Colonic mucosa (tissue), 4 donors: ENCODE measurements at regions of chr7 and their contacts with region 1.

Region 1: DNA sequence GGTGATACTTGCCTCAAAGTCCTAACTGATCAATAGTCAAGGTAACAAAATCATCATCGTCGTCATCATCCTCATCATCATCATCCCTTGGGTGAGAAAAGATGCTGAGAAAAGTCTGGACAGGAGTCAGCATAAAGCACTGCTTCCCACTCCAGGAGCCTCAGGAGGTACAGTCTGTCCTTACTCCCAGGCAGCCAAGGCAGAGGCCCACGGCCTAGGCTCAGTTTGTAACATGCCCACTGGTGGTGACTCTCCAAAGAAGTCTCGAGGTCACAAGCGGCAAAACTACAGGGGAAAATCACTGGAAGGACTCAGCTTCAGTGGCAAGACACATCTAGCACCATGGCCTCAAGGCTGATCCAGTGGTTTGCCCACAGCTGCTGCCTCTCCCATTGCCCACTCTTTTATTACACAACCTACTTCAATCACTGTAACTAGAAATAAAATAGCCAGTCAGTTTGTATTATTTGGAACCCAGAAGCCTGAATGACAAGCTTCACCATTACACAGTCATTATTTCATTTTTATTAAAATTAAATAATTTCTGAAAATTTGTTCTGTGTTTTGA is 150.4 kb downstream of the SRPK2 start:
- DNase-seq: no peak
- H3K4me3 ChIP-seq: no peak overlapping the region
- H3K27ac ChIP-seq: no peak overlapping the region
- H3K4me1 ChIP-seq: no peaks in the 10 kb centered on the region
- H3K27me3 ChIP-seq: no peaks in the 10 kb centered on the region
- CTCF ChIP-seq: no peak

Region 2: DNA sequence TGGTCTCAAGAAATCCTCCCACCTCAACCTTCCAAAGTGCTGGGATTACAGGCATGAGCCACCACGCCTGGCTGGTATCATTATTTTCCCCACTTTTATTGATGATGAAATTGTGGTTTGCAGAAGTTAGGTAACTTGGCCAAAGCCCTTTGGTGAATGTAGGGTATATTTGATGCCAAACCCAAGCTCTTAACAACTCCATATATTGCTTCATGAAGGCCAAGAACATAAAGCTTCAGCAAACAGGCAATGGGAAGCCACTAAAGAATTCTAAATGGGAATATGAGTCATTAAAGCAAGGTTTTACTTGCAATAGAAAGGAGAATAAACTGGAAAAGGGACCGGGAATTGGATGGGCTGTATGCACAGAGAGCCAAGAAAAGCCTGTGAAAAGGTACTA is 81.6 kb before region 1 on chr7:
- intact Hi-C with region 1: loop called (anchors 10 kb)
- DNase-seq: no peak
- H3K4me3 ChIP-seq: no peak overlapping the region
- H3K27ac ChIP-seq: no peak overlapping the region
- H3K4me1 ChIP-seq: no peaks in the 10 kb centered on the region
- H3K27me3 ChIP-seq: no peaks in the 10 kb centered on the region
- CTCF ChIP-seq: no peak